Activated CD8-positive, alpha-beta T cell treated with anti-CD3 and anti-CD28 coated beads, Interleukin-2, amount 10 ng/mL, durations not matched to agents 7 days and 5 days (primary cell): ENCODE measurements at regions of chr7 and their contacts with region 1.

Region 1: GRCh38 chr7:5689118-5689517 is 92.3 kb downstream of the RNF216 start:
- DNase-seq: peak; percentile 71
- ATAC-seq: peak; percentile 58
- H3K4me3 Mint-ChIP-seq: peak overlapping the region; percentile 51
- H3K27ac Mint-ChIP-seq: peak overlapping the region; percentile 90
- H3K4me1 Mint-ChIP-seq: peaks cover 94% of the 10 kb centered on the region
- H3K27me3 Mint-ChIP-seq: no peaks in the 10 kb centered on the region

Region 2: DNA sequence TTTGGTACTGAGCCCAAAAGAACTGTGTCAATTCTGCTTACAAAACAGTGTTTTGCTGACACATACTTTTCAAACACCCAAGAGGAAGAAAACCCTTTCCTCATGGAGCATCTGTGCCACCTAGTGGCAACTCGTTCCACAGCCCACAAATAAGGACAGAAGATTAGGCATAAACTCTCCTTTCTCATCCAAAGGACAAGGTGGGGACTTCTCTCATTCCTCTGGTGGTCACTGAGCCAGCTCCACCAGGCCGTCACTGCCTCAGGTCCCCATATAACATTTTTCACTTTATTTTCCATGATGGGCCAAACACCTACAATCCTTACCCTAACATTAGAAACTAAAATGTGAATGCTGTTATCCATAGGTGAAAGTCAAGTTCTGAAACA is 15.4 kb after region 1 on chr7:
- CTCF ChIA-PET with region 1: interaction called, 34 read pairs
- POLR2A ChIA-PET with region 1: interaction called, 14 read pairs
- DNase-seq: peak; percentile 80
- ATAC-seq: no peak
- H3K4me3 Mint-ChIP-seq: no peak overlapping the region
- H3K27ac Mint-ChIP-seq: no peak overlapping the region
- H3K4me1 Mint-ChIP-seq: peaks cover 35% of the 10 kb centered on the region
- H3K27me3 Mint-ChIP-seq: no peaks in the 10 kb centered on the region